ENCODE measurements at regions of chr22 and their contacts with region 1.

Region 1: GRCh38 chr22:28674121-28674563 is 5.5 kb downstream of the TTC28 start:
- DNase-seq: peak in 8 of 14 experiments; percentile 8 to 85 (median 50)
- ATAC-seq: peak; percentile 97
- H3K4me3 ChIP-seq: no peak overlapping the region
- H3K4me3 Mint-ChIP-seq: peak overlapping the region; percentile 90
- H3K27ac ChIP-seq: no peak overlapping the region
- H3K27ac Mint-ChIP-seq: peak overlapping the region; percentile 96
- H3K4me1 ChIP-seq: peaks cover 14% of the 10 kb centered on the region
- H3K4me1 Mint-ChIP-seq: peaks cover 40% of the 10 kb centered on the region
- H3K27me3 ChIP-seq: peaks cover 35 to 71% of the 10 kb centered on the region in 2 experiments
- H3K27me3 Mint-ChIP-seq: peaks cover 74% of the 10 kb centered on the region
- CTCF ChIP-seq: no peak

Region 2: DNA sequence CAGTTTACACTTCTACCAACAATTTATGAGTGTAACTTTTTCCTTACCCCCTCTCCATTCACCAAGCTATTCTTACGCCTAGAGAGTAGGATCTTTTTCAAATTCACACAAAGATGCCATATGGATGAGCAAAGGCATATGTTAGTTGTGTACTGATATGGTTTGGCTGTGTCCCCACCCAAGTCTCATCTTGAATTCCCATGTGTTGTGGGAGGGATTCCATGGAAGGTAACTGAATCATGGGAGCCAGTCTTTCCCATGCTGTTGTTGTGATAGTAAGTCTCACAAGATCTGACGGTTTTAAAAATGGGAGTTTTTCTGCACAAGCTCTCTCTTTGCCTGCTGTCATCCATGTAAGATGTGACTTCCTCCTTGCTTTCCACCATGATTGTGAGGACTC is 34.8 kb before region 1 on chr22:
- CTCF ChIA-PET with region 1: no interaction called
- POLR2A ChIA-PET with region 1: no interaction called
- intact Hi-C with region 1: no loop called
- DNase-seq: no peak
- ATAC-seq: no peak
- H3K4me3 ChIP-seq: no peak overlapping the region
- H3K4me3 Mint-ChIP-seq: no peak overlapping the region
- H3K27ac ChIP-seq: no peak overlapping the region
- H3K27ac Mint-ChIP-seq: no peak overlapping the region
- H3K4me1 ChIP-seq: no peaks in the 10 kb centered on the region
- H3K4me1 Mint-ChIP-seq: no peaks in the 10 kb centered on the region
- H3K27me3 ChIP-seq: peaks cover 13 to 29% of the 10 kb centered on the region in 2 experiments
- H3K27me3 Mint-ChIP-seq: peaks cover 90% of the 10 kb centered on the region
- CTCF ChIP-seq: no peak

Region 3: GRCh38 chr22:28951969-28952521 is 277.9 kb after region 1 on chr22:
- CTCF ChIA-PET with region 1: no interaction called
- POLR2A ChIA-PET with region 1: no interaction called
- intact Hi-C with region 1: loop called (anchors 10 kb)
- DNase-seq: no peak
- ATAC-seq: no peak
- H3K4me3 ChIP-seq: no peak overlapping the region
- H3K4me3 Mint-ChIP-seq: no peak overlapping the region
- H3K27ac ChIP-seq: no peak overlapping the region
- H3K27ac Mint-ChIP-seq: no peak overlapping the region
- H3K4me1 ChIP-seq: peaks cover 19% of the 10 kb centered on the region
- H3K4me1 Mint-ChIP-seq: peaks cover 18% of the 10 kb centered on the region
- H3K27me3 ChIP-seq: peaks cover 47 to 56% of the 10 kb centered on the region in 2 experiments
- H3K27me3 Mint-ChIP-seq: peaks cover 79% of the 10 kb centered on the region
- CTCF ChIP-seq: no peak

Measured in CD4-positive, alpha-beta T cell (primary cell).